Esophagus squamous epithelium (tissue), 5 donors: ENCODE measurements at regions of chr1 and their contacts with region 1.

Region 1: GRCh38 chr1:34786521-34787325 is 5.7 kb downstream of the GJB3 start:
- DNase-seq: no peak
- H3K4me3 ChIP-seq: no peak overlapping the region
- H3K27ac ChIP-seq: peak overlapping the region; percentile 9 to 60 (median 42)
- H3K4me1 ChIP-seq: peaks cover 0 to 63% (median 7%) of the 10 kb centered on the region in 3 donors
- H3K27me3 ChIP-seq: peaks cover 0 to 32% (median 1%) of the 10 kb centered on the region in 4 donors
- CTCF ChIP-seq: peak; percentile 57 to 90 (median 76)
- POLR2A ChIP-seq: no peak

Region 2: GRCh38 chr1:34754964-34755637 is 31.6 kb before region 1 on chr1 and contains the start of gene GJB5:
- intact Hi-C with region 1: no loop called
- DNase-seq: no peak
- H3K4me3 ChIP-seq: peak within 1 kb of the TSS; percentile 42 to 60 (median 51)
- H3K27ac ChIP-seq: peak within 1 kb of the TSS; percentile 92 to 95 (median 95)
- H3K4me1 ChIP-seq: peaks cover 10 to 58% (median 23%) of the 10 kb centered on the region in 3 donors
- H3K27me3 ChIP-seq: peaks cover 0 to 10% (median 0%) of the 10 kb centered on the region in 4 donors
- CTCF ChIP-seq: no peak
- POLR2A ChIP-seq: peak in 2 of 4 donors; percentile 16 to 47
- total RNA-seq, gene GJB5: 91.7 to 123 (median 104) TPM

Region 3: GRCh38 chr1:34852677-34853217 is 66.0 kb after region 1 on chr1:
- intact Hi-C with region 1: loop called (anchors 5 kb)
- DNase-seq: peak; percentile 52
- H3K4me3 ChIP-seq: no peak overlapping the region
- H3K27ac ChIP-seq: peak overlapping the region; percentile 28 to 78 (median 72)
- H3K4me1 ChIP-seq: peaks cover 12 to 72% (median 35%) of the 10 kb centered on the region in 3 donors
- H3K27me3 ChIP-seq: no peaks in the 10 kb centered on the region
- CTCF ChIP-seq: peak; percentile 92 to 100 (median 99)
- POLR2A ChIP-seq: peak in 1 of 4 donors; percentile 19

Region 4: GRCh38 chr1:34907487-34908090 is 120.9 kb after region 1 on chr1:
- intact Hi-C with region 1: no loop called
- DNase-seq: no peak
- H3K4me3 ChIP-seq: no peak overlapping the region
- H3K27ac ChIP-seq: no peak overlapping the region
- H3K4me1 ChIP-seq: no peaks in the 10 kb centered on the region
- H3K27me3 ChIP-seq: peaks cover 0 to 13% (median 0%) of the 10 kb centered on the region in 4 donors
- CTCF ChIP-seq: no peak
- POLR2A ChIP-seq: no peak